Posterior cingulate gyrus (tissue), 11 donors: ENCODE measurements at regions of chr6 and their contacts with region 1.

Region 1: DNA sequence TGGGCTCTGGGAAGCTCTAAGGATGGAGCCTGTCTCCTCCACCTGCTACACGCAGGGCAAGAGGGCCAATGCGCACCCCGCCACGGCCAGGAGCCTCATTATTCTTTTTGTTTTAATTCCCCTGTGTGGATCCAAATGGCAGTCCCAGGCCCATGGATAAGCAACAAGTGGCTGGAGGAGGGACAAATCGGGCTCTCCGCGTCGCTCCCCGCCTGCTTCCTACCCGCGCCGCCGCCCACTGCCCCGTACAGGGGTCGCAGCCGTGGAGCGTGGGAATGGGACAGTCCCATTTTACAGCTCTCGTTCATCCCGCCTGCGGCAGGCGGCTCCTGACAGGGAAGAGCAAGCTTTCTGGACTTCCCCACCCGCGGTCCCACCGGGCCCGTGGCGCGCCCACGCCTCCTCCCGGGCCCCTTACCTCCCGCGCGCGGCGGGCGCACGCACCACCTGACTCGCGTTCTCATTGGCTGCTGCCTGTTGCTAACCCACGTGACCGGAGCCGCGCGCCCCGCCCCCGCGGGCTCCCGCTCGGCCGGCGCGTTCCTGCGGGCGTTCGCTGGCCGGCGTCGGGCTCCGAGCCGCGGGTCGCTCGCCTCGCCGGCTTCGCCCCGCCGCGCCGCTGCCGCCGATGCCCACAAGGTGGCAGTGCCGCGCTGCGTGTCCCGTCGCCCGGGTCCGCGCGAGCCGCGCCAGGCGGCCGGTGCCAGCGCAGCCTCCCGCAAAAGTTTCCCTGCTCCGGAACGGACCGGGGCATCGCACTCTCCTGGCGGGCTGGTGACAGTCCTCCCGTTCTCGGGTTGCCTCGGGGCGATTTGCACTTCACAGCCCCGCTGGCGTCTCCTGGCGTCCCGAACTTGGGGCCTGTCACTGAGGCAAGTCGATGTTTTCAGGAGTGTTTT is 93.3 kb downstream of the CD83 start:
- DNase-seq: peak; percentile 80 to 99 (median 91)

Region 2: DNA sequence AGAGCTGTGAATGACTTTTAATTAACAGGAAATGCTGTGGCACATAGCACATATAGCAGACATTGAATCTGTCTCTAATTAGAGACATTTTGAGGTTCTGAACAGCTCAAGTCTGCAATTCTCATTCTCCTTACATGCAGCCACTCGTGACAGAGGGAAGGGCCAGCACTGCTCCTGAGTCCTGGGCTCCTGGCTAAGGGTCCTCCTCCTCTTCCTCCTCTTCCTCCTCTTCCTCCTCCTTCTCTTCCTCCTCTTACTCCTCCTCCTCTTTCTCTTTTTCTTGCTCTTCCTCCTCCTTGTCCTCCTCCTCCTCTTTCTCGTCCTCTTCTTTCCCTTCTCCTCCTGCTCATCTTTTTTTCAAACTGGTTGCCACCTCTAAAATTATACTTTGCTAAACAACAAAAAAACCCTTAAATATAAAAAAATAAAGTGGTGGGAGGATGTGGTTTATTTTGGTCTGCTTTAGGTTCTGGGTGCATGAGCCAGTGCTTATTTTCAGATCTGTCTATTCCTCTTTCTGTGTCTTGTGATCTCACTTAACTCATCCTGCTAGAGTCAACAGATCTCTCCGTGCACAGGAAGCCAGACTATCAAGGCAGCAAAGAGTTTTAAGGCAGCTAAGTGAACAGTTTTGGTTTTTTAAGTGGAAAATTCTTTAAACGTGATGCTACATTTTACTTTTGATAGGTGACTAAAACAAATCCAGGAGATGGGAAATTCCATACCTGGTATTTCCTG is 65.9 kb after region 1 on chr6:
- intact Hi-C with region 1: loop called (anchors 5 kb)
- DNase-seq: peak in 1 of 10 donors; percentile 8

Region 3: DNA sequence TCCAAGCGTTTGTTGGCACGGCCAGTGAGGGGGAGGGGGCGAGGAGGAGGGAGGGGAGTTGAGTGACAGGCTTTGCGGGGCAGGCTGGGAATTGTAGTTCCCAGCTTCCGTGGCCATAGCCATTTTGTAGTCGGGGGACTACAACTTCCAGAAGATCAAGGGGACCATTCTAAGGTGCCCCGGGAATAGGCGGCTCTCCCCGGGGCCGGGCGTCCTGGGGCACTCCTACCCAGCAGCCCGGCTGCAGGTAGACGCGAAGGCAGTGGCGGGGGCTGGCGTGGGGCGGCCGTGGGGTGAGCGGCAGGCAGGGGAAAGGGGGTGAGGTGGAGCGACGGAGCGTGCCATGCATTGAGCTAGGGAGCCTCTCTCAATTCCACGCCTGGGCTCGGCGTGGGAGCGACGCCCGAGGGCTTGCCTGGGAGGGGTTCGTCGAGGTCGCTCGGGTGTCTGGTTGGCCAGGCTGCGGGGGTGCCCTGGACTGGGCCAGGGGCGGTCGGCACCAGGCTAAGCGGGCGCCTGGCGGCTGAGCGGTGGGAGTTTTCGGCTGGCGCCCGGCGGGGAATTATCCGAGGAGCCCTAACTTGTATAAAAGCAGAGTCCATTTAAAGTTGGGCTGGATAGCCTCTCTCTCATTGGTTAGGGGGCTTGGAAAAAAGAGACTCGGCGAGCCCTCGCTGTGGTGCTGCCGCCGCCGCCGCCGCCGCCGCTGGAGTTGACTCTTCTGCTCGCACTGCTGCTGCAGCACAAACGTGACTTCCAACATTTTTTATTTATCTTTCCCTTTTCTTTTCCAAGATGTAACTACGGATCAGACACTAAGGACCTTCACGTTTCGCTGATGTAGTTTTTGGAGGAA is 1034.7 kb after region 1 on chr6 and contains the start of gene JARID2:
- intact Hi-C with region 1: loop called (anchors 2 kb)
- DNase-seq: peak; percentile 95 to 99 (median 97)

Region 4: DNA sequence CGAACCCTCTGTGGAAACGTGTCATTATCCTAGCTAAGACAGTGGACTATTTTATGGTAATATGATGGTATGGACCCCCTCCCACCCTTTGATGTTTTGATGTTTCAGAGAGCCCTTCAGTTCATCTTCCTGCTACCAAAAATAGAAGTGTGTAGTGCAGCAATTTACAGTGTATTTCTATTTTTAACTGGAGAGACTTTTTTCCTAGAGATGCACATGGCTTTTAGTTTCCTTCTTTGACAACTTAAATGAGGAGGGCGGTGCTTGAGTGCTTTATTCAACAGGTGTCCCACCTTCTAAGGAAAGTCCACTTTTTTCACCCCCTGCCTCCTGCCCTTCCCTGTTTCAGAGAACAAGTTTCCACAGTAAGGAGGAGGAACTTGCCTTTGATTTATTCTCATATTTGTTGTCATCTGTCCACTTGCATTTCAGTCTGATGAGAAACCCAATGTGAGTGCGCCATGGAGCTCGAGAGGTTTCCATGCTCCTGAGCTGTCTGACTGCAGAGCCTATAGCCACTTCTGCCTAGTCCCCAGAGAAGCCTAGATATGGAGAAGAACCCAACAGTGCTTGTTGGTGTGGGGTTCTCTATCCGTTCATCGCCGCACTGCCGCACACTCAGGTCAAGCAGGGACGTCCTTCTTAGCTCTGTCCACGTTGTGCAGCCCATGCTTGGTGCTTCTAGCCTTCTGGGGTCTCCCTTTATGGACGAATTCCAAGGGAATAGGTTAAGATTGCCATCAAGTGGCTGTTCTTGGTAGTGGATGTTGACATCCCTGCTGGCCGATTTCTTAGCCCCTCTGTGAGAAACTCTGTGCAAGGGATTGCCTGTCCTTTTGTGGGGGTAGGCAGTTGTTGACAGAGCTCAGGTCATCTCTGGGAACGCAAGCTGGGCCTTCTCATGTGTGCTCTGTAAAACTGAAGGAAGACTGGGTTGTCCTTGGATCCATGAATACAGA is 1179.1 kb after region 1 on chr6:
- intact Hi-C with region 1: loop called (anchors 10 kb)
- DNase-seq: peak in 1 of 10 donors; percentile 21

Region 5: GRCh38 chr6:15491255-15491985 is 1280.5 kb after region 1 on chr6:
- intact Hi-C with region 1: loop called (anchors 2 kb)
- DNase-seq: peak; percentile 68 to 98 (median 85)

Region 6: GRCh38 chr6:15621203-15622044 is 1410.5 kb after region 1 on chr6:
- intact Hi-C with region 1: loop called (anchors 5 kb)
- DNase-seq: peak in 2 of 10 donors; percentile 13 to 15